ENCODE measurements at regions of chr12 and their contacts with region 1.

Region 1: DNA sequence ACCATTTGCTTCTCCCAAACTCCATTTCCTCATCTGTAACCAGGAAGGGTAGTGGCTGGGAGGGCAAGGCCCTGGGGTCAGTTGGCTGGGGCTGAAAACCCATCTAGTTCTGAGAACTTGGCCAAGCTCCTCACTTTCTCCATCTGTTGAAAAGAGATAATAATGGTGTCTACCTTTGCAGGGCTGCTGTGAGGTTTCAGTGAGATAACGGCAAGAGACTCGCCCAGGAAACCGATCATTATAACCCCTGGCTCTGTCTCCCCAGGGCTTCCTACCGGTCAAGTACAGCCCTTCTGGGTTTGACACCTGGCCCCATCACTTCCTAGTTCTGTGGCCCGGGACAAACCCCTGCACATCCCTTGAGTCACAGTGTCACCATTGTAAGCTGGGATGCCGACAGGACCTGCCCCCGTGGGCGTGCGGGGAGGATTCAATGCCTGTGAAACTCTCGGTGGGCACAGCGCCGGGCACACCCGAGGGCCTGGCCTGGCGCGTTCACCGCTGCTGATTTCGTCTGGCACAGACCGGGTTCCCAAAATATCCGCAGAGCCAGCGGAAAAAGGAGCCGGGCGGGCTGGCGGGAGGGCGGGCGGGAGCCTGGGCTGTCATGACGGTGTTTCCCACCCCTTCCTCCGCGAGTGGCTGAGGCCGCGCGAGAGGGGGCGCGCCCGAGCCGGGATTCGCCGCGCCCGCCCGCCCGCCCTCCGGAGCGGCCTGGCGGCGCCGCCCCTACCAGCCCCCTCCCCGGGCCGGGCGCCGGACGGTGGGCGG is 4.4 kb downstream of the KMT5A start:
- DNase-seq: peak; percentile 86
- H3K4me3 Mint-ChIP-seq: peak overlapping the region; percentile 80
- H3K27ac Mint-ChIP-seq: peak overlapping the region; percentile 88
- H3K4me1 Mint-ChIP-seq: peaks cover 39% of the 10 kb centered on the region
- H3K27me3 Mint-ChIP-seq: no peaks in the 10 kb centered on the region

Region 2: GRCh38 chr12:123263196-123263817 is 125.1 kb before region 1 on chr12:
- CTCF ChIA-PET with region 1: no interaction called
- POLR2A ChIA-PET with region 1: no interaction called
- intact Hi-C with region 1: no loop called
- DNase-seq: no peak
- H3K4me3 Mint-ChIP-seq: no peak overlapping the region
- H3K27ac Mint-ChIP-seq: no peak overlapping the region
- H3K4me1 Mint-ChIP-seq: peaks cover 6% of the 10 kb centered on the region
- H3K27me3 Mint-ChIP-seq: no peaks in the 10 kb centered on the region

Region 3: GRCh38 chr12:123427036-123427769 is 38.8 kb after region 1 on chr12:
- CTCF ChIA-PET with region 1: interaction called, 3 read pairs
- POLR2A ChIA-PET with region 1: interaction called, 6 read pairs
- intact Hi-C with region 1: loop called (anchors 1 kb)
- DNase-seq: peak; percentile 64
- H3K4me3 Mint-ChIP-seq: peak overlapping the region; percentile 54
- H3K27ac Mint-ChIP-seq: peak overlapping the region; percentile 92
- H3K4me1 Mint-ChIP-seq: peaks cover 31% of the 10 kb centered on the region
- H3K27me3 Mint-ChIP-seq: no peaks in the 10 kb centered on the region

Region 4: DNA sequence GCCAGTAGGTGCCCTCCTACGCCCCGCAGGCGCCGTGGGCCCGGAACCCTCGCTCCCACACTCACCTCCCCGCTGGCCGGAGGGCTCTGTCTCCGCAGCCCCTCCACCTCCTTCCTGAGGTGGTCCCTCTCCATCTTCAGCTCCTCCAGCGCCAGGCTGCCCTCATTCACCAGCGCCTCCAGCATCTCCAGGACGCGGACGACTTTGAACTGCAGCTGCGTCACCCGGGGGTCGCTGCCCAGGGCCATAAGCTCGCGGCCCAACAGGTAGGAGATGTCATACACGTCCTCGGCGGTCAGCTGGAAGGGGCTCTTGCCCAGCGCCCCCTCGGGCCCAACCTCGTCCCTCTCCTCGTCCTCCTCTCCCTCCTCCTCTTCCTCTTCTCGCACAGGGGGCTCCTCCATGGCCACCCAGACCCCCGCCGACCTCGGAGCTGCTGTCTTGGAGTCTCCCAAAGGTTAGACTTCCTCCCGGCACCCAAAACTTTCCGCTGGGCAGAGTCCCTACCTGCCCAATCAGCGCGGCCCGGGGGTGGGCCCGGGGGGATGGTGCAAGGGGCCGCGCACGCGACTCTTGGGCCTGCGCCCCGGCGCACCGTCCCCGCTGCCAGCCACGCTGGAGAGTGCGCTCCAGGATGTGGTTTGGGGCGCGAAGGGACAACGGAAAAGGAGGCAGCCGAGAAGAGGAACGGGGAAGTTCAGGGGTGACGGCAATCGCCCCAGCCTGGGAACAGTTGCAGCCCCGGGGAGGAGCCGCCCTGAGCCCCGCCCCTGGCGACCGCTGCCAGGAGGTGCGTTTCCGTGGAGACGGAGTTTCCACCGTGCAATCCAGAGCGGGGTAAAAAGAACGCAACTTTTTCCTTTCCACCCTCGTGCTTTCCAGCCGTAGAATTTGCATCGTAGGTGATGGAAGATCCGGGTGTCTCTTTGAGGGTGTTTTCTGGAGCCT is 47.9 kb after region 1 on chr12 and contains the start of gene RILPL2:
- CTCF ChIA-PET with region 1: interaction called, 3 read pairs
- POLR2A ChIA-PET with region 1: interaction called, 8 read pairs
- intact Hi-C with region 1: loop called (anchors 2 kb)
- DNase-seq: peak; percentile 97
- H3K4me3 Mint-ChIP-seq: peak within 1 kb of the TSS; percentile 99
- H3K27ac Mint-ChIP-seq: peak within 1 kb of the TSS; percentile 98
- H3K4me1 Mint-ChIP-seq: peaks cover 30% of the 10 kb centered on the region
- H3K27me3 Mint-ChIP-seq: no peaks in the 10 kb centered on the region
- total RNA-seq, gene RILPL2: 15.4 to 16.6 TPM

Region 5: GRCh38 chr12:123533672-123534643 is 145.6 kb after region 1 on chr12 and contains the start of gene RILPL1:
- CTCF ChIA-PET with region 1: no interaction called
- POLR2A ChIA-PET with region 1: interaction called, 4 read pairs
- intact Hi-C with region 1: loop called (anchors 5 kb)
- DNase-seq: peak; percentile 49
- H3K4me3 Mint-ChIP-seq: peak within 1 kb of the TSS; percentile 77
- H3K27ac Mint-ChIP-seq: peak within 1 kb of the TSS; percentile 62
- H3K4me1 Mint-ChIP-seq: peaks cover 17% of the 10 kb centered on the region
- H3K27me3 Mint-ChIP-seq: no peaks in the 10 kb centered on the region
- total RNA-seq, gene RILPL1: 4.0 to 4.8 TPM

Measured in activated CD4-positive, alpha-beta memory T cell treated with anti-CD3 and anti-CD28 coated beads for 36 hours (primary cell).